Right ventricle myocardium inferior (tissue), 1 donor: ENCODE measurements at regions of chr11 and their contacts with region 1.

Region 1: GRCh38 chr11:72091005-72091691 is 10.5 kb downstream of the LRRC51 start:
- DNase-seq: peak; percentile 76
- ATAC-seq: peak; percentile 89

Region 2: GRCh38 chr11:72030472-72031045 is 60.6 kb before region 1 on chr11:
- intact Hi-C with region 1: loop called (anchors 1 kb)
- DNase-seq: no peak
- ATAC-seq: no peak